ENCODE measurements at regions of chr11 and their contacts with region 1.

Region 1: DNA sequence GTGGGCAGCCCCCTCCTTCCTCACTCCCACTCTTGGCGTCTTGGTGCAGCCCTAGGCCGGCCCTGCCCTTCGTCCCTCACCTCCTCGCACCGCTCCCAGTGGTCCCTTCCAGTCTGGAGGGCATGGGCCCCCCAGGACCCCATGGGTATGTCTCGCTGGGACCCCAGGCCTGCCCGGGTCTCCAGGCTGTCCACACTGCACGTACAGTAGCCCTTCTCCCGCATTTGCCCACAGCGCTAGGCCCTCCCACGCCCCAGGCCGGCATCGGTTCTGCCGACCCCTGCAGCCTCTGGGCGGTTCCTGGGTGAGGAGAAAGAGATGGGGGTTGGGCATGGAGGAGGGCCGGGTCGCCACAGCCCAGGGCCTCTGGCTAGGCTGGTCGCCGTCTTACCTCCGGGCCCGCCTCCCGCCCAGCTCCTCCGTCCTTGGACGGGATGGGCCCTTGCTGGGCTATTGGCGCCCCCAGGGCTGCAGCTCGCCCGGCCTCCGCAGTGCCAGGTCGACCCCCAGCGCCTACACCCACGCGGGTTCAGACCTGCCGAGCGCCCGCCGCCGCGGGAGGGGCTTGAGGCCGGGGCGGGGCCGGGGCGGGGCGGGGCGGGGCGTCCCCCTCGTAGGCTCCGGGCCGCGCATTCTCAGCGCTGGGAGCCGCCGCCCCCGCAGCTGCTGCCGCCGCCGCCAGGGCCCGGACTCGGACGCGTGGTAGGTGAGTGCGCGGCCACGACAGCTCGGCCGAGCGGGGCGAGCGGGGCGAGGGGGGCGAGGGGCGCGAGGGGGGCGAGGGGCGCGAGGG is at the start of gene CD151:
- DNase-seq: peak in 1 of 2 donors; percentile 87
- H3K4me3 ChIP-seq: peak within 1 kb of the TSS; percentile 67 to 84
- H3K27ac ChIP-seq: peak within 1 kb of the TSS; percentile 81 to 95
- H3K4me1 ChIP-seq: peaks cover 13 to 57% of the 10 kb centered on the region in 2 donors
- H3K27me3 ChIP-seq: no peaks in the 10 kb centered on the region
- CTCF ChIP-seq: no peak
- total RNA-seq, gene CD151: 898 TPM

Region 2: DNA sequence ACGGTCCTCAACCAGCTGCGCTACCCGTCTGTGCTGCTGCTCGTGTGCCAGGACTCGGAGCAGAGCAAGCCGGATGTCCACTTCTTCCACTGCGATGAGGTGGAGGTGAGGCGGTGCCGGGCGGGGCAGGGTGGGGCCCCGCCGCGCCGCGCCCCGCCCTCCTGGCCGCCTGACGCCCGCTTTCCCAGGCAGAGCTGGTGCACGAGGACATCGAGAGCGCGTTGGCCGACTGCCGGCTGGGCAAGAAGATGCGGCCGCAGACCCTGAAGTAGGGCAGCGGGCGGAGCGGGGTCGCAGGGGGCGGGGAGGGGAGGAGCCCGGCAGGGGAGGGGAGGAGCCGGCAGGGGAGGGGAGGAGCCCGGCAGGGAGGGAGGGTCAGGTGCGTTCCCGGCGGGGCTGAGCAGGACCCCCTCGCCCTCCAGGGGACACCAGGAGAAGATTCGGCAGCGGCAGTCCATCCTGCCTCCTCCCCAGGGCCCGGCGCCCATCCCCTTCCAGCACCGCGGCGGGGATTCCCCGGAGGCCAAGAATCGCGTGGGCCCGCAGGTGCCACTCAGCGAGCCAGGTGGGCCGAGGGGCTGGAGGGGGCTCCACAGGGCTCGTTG is 111.8 kb before region 1 on chr11:
- intact Hi-C with region 1: no loop called
- DNase-seq: no peak
- H3K4me3 ChIP-seq: peak overlapping the region in 1 of 2 donors; percentile 24
- H3K27ac ChIP-seq: no peak overlapping the region
- H3K4me1 ChIP-seq: peaks cover 0 to 2% of the 10 kb centered on the region in 2 donors
- H3K27me3 ChIP-seq: no peaks in the 10 kb centered on the region
- CTCF ChIP-seq: no peak

Region 3: DNA sequence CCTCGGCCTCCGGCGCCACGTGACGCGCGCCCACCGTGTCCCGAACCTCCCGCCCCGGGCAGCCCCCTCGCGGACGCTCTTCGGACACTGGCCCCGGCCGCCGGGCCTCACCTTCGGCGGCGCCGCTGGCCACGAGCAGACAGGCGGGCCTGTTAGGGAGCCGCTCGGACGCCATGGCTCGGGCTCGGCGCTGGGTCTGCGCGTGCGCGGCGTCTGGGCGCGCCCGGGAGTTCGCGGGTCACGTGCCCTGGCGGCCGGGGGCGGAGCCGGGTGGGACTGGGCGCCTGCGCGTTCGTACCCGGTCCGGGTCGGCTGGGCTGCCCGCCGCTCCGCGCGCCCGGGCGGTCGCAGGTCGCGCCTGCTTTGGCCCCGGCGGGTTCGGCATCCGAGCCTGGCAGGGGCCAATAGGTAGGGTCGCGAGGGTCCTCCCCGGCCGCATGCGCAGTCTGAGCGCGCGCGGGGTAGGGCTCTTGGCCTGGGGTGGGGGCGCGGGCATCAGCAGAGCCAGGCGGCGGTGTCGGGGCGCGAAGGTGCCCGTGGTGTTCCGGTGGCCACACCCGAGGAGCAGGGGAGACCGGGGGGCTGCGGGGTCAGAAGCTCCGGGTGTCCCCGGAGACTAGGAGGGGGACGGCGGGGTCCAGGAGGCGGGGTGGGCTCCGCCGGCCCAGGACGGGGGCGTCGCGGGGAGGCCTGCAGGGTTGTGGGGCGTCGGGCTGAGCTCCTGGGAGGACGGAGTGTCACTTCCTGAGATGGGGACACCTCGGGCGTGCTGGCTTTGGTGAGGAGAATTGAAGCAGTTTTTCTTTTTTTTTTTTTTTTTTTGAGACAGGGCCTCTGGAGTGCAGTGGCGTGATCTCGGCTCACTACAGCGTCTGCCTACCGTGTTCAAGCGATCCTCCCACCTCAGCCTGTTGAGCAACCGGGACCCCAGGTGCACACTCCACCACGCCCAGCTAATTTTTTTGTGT is 54.9 kb before region 1 on chr11 and contains the start of gene GATD1:
- intact Hi-C with region 1: no loop called
- DNase-seq: peak; percentile 49 to 94
- H3K4me3 ChIP-seq: peak within 1 kb of the TSS; percentile 65 to 88
- H3K27ac ChIP-seq: peak within 1 kb of the TSS; percentile 56 to 75
- H3K4me1 ChIP-seq: peaks cover 8 to 23% of the 10 kb centered on the region in 2 donors
- H3K27me3 ChIP-seq: no peaks in the 10 kb centered on the region
- CTCF ChIP-seq: no peak
- total RNA-seq, gene GATD1: 12.2 TPM

Region 4: DNA sequence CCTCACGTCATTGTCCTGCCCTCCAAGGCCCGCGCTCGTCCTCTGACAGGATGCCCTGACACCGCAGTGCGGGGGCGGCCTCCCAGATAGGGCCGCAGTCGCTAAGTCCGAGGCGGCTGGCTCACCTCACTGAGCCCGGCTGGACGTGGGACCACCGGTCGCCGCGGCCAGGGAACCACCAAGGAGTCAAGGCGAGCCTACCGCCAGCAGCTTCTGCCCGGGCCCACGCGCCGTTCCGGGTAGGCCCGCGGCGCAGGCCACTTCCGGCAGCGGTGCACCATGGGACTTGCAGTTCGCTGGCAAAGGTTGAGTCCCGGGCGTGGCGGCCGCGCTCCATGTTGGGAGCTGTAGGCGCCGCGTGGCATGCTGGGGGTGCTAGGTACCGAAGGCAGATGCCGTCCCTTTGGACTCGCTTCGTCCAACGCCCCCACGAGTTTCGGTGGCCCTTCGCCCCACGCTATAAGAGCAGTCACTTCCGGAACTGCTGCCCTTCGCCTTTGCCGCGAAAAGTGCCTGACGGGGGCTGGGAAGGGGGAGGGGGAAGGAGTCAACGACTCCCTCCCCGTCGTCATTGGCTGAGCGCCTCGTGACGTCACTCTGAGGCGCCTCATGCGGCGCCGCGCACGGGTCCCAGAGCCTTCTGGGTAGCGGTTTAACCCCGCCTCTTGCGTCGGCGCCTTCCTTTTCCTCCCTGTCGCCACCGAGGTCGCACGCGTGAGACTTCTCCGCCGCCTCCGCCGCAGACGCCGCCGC is 23.1 kb before region 1 on chr11 and contains the start of gene RPLP2:
- intact Hi-C with region 1: loop called (anchors 1 kb)
- DNase-seq: peak; percentile 88 to 99
- H3K4me3 ChIP-seq: peak within 1 kb of the TSS; percentile 73 to 97
- H3K27ac ChIP-seq: peak within 1 kb of the TSS; percentile 93 to 98
- H3K4me1 ChIP-seq: peaks cover 9 to 34% of the 10 kb centered on the region in 2 donors
- H3K27me3 ChIP-seq: no peaks in the 10 kb centered on the region
- CTCF ChIP-seq: no peak
- total RNA-seq, gene RPLP2: 897 TPM

Region 5: DNA sequence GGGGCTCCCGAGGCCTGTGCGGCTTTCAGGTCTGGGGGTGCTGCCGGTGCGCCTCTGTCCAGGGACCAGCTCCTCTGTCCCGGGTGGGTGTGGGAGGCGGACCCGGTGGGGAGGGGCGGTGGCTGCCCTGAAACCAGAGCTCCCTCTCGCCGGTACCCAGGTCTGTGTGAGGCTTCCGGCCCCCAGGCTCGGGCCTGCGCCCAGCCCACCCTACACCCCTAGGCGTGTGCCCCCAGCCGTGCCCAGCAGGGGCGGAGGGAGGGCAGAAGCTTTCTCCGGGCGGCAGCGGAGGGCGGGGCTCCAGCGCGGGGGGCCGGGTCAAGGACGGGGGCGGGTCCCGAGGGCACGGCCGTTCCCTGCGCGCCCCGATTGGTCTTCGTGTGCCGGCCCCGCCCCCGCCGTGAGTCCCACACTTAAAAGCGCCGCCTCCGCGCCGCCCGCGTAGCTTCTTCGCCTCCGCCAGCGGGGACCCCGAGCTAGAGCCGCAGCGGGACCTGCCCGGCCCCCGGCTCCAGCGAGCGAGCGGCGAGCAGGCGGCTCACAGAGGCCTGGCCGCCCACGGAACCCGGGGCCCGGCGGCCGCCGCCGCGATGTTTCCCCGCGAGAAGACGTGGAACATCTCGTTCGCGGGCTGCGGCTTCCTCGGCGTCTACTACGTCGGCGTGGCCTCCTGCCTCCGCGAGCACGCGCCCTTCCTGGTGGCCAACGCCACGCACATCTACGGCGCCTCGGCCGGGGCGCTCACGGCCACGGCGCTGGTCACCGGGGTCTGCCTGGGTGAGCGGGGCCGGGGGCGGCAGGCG is 13.2 kb before region 1 on chr11:
- intact Hi-C with region 1: loop called (anchors 1 kb)
- DNase-seq: peak in 1 of 2 donors; percentile 95
- H3K4me3 ChIP-seq: peak overlapping the region; percentile 80 to 91
- H3K27ac ChIP-seq: peak overlapping the region; percentile 98 to 99
- H3K4me1 ChIP-seq: peaks cover 16 to 24% of the 10 kb centered on the region in 2 donors
- H3K27me3 ChIP-seq: no peaks in the 10 kb centered on the region
- CTCF ChIP-seq: peak; percentile 32 to 55 (median 36)

Region 6: GRCh38 chr11:894575-895201 is 62.2 kb after region 1 on chr11:
- intact Hi-C with region 1: no loop called
- DNase-seq: no peak
- H3K4me3 ChIP-seq: no peak overlapping the region
- H3K27ac ChIP-seq: no peak overlapping the region
- H3K4me1 ChIP-seq: no peaks in the 10 kb centered on the region
- H3K27me3 ChIP-seq: no peaks in the 10 kb centered on the region
- CTCF ChIP-seq: no peak

Region 7: DNA sequence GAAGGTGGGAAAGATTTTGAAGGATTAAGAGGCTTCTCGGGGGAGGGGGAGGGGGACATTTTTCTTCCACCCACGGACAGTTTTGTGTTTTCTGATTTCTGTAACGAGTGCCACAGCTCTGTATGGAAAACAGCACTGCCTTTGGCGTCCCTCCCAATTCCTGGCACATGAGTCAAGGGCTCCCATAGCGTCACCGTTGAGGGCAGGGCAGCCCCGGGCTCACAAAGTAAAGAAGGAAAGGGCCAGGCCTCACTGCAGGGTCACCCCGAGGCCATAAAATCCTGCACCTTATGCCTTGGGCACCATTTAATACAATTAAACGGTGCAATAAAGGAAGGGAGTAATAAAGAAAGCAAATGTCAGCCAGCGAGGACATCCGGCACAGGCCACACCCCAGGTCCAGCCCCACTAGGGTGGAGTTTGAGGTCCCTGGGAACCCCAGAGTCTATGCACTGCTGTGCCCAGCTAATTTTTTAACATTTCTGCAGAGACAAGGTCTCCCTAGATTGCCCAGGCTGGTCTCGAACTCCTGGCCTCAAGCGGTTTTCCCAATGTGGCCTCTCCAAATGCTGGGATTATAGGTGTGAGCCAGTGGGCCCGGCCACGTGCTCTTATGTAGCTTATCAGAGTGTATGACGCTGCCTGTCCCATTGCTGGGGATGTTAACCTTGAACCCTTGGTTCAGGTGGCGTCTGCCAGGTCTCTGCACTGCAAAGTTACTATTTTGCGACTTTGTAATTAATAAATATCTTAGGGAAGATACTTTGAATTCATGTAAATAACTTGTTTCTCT is 228.5 kb after region 1 on chr11:
- intact Hi-C with region 1: no loop called
- DNase-seq: peak in 1 of 2 donors; percentile 59
- H3K4me3 ChIP-seq: no peak overlapping the region
- H3K27ac ChIP-seq: no peak overlapping the region
- H3K4me1 ChIP-seq: no peaks in the 10 kb centered on the region
- H3K27me3 ChIP-seq: no peaks in the 10 kb centered on the region
- CTCF ChIP-seq: no peak

Measured in ascending aorta (tissue), 2 donors.